ENCODE measurements at regions of chr1 and their contacts with region 1.

Region 1: DNA sequence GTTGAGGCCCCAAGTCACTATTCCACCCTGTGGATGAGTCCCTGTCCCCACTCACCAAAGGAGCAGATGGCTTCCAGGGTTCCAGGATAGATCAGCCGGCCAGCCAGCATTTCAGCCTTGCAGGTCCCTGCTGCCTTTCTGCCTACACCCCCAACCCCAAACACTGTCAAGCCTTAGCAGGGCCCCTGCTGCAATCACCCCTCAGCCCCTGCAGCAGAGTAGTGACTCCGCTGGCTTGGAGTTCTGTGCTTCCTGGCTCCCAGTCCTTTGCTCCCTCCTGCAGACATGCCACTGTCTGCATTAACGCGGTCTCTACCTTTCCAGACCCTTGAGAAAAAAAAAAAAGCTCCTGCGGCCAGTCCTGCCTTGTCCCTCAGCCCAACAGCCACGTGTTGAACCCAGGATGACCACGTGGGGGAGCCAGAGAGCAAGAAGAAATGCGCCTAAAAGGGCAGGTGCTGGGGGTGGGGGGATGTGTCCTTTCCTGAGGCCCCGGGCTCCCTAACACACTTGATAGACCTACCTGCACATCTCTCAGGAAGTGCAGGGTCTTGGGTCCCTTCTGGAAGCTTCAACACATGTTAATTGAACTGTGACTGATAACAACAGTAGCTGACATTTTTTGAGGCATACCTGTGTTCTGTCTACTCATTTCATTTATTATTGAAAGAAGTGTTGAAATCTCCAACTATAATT is 37.4 kb downstream of the RASSF5 start:
- DNase-seq: peak; percentile 89
- H3K4me3 Mint-ChIP-seq: no peak overlapping the region
- H3K27ac Mint-ChIP-seq: no peak overlapping the region
- H3K4me1 Mint-ChIP-seq: no peaks in the 10 kb centered on the region
- H3K27me3 Mint-ChIP-seq: no peaks in the 10 kb centered on the region
- CTCF ChIP-seq: peak; percentile 98

Region 2: DNA sequence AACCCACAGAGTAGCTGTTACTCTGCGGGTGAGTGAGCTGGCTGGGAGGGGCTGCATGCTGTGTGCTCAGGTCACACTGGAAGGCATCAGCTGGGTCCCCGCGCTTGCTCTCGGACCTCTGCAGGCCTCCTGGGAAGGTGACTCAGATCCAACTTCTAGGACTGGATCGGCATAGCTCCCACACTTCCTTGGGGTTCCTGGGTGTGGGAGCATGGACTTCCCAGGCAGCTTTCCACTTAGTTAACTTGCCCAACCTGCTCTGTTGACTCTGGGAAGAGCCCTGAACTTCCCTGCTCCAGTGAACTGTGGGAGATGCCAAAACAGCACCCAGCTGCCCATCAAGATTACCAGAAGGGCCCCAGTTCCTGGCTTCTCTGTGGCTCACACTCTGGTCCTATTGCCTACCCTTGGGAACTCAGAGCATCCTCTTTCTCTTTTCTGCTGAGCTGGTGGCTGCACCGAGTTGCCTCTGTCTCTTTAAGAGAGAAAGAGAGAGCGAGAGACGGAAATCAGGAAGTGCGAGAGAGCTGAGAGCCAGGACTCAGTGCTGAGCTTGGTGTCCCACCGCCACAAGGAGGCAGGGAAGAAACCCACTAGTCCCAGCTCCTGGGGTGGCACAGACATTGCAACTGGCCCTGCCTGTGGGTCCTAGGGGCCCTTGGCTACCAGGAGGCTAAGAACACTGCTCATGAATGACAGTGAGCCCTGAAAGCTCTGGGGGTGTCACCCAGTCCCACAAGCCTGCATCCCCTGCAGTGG is 74.6 kb before region 1 on chr1 and contains the start of gene IKBKE:
- CTCF ChIA-PET with region 1: interaction called, 10 read pairs
- POLR2A ChIA-PET with region 1: interaction called, 3 read pairs
- intact Hi-C with region 1: no loop called
- DNase-seq: peak; percentile 85
- H3K4me3 Mint-ChIP-seq: peak within 1 kb of the TSS; percentile 75
- H3K27ac Mint-ChIP-seq: peak within 1 kb of the TSS; percentile 61
- H3K4me1 Mint-ChIP-seq: peaks cover 43% of the 10 kb centered on the region
- H3K27me3 Mint-ChIP-seq: peaks cover 13% of the 10 kb centered on the region
- CTCF ChIP-seq: no peak
- total RNA-seq, gene IKBKE: 7.1 and 12.1 TPM in 2 replicates

Region 3: DNA sequence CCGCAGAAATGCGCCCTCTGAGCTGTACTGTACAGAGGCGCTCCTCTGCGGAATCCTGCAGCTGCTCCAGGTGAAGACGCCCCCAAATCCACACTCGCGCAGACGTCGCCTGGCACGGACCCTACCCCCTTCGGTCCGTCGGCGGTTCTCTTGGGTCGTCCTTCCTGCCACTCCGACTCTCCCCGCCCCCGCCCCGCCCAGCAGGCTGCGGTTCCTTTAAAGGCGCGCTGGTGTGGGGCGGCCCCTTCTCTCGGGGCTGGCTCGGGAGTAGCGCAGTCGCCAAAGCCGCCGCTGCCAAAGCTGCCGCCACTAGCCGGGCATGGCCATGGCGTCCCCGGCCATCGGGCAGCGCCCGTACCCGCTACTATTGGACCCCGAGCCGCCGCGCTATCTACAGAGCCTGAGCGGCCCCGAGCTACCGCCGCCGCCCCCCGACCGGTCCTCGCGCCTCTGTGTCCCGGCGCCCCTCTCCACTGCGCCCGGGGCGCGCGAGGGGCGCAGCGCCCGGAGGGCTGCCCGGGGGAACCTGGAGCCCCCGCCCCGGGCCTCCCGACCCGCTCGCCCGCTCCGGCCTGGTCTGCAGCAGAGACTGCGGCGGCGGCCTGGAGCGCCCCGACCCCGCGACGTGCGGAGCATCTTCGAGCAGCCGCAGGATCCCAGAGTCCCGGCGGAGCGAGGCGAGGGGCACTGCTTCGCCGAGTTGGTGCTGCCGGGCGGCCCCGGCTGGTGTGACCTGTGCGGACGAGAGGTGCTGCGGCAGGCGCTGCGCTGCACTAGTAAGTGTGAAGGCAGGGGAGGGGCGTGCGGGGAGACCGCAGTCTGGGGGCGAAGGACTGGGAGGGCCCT is 37.2 kb before region 1 on chr1 and contains the start of gene RASSF5:
- CTCF ChIA-PET with region 1: interaction called, 145 read pairs
- POLR2A ChIA-PET with region 1: interaction called, 11 read pairs
- intact Hi-C with region 1: loop called (anchors 1 kb)
- DNase-seq: peak; percentile 87
- H3K4me3 Mint-ChIP-seq: peak within 1 kb of the TSS; percentile 72
- H3K27ac Mint-ChIP-seq: peak within 1 kb of the TSS; percentile 72
- H3K4me1 Mint-ChIP-seq: peaks cover 74% of the 10 kb centered on the region
- H3K27me3 Mint-ChIP-seq: no peaks in the 10 kb centered on the region
- CTCF ChIP-seq: no peak
- total RNA-seq, gene RASSF5: 8.3 and 9.6 TPM in 2 replicates

Region 4: GRCh38 chr1:206513312-206514111 is 31.2 kb before region 1 on chr1:
- CTCF ChIA-PET with region 1: interaction called, 19 read pairs
- POLR2A ChIA-PET with region 1: interaction called, 4 read pairs
- intact Hi-C with region 1: no loop called
- DNase-seq: peak; percentile 100
- H3K4me3 Mint-ChIP-seq: peak overlapping the region; percentile 59
- H3K27ac Mint-ChIP-seq: peak overlapping the region; percentile 99
- H3K4me1 Mint-ChIP-seq: peaks cover 73% of the 10 kb centered on the region
- H3K27me3 Mint-ChIP-seq: no peaks in the 10 kb centered on the region
- CTCF ChIP-seq: no peak

Region 5: GRCh38 chr1:206524739-206525369 is 19.9 kb before region 1 on chr1:
- CTCF ChIA-PET with region 1: interaction called, 23 read pairs
- POLR2A ChIA-PET with region 1: interaction called, 6 read pairs
- intact Hi-C with region 1: no loop called
- DNase-seq: peak; percentile 93
- H3K4me3 Mint-ChIP-seq: no peak overlapping the region
- H3K27ac Mint-ChIP-seq: peak overlapping the region; percentile 85
- H3K4me1 Mint-ChIP-seq: peaks cover 18% of the 10 kb centered on the region
- H3K27me3 Mint-ChIP-seq: no peaks in the 10 kb centered on the region
- CTCF ChIP-seq: no peak

Region 6: DNA sequence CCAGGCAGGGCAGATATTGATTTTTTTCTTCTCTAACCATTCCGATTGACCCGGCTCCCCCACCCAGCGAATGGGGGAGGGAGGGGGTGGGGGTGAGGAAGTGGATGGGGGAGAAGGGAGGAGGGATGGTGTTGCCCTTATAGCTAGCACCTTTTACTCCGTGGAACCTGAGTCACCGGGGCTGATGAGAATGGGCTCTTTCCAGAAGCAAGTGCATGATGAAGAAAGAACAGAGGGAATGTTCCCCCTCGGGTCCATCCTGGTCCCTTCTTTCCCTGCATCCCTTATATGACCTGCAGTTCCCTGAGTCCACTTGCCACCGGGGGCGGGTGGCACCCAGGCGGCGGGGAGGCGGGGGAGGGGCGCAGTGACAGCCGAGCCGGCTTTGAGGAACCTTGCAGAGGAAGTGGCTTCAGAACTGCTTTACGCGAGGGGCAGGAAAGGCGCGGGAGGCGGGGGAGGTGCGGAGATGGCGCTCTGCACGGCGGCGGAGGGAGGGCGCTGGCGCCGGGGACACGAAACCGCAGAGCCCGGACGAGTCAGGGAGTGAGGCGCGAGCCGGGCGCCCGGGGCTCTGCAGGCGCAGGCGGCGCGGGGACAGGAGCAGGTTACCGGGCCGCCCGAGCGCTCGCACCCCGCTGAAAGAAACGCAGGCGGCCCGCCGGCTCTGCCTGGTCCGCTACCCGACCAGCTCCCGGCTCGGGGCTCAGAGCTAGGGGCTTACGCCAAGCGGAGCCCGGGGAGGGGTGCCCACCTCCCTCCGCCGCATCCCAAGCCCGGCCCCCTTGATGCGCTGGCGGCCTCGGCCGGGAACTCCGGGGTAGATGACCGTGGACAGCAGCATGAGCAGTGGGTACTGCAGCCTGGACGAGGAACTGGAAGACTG is 12.3 kb after region 1 on chr1:
- CTCF ChIA-PET with region 1: interaction called, 281 read pairs
- POLR2A ChIA-PET with region 1: interaction called, 4 read pairs
- intact Hi-C with region 1: no loop called
- DNase-seq: peak; percentile 66
- H3K4me3 Mint-ChIP-seq: peak overlapping the region; percentile 68
- H3K27ac Mint-ChIP-seq: no peak overlapping the region
- H3K4me1 Mint-ChIP-seq: no peaks in the 10 kb centered on the region
- H3K27me3 Mint-ChIP-seq: no peaks in the 10 kb centered on the region
- CTCF ChIP-seq: no peak

Region 7: GRCh38 chr1:206590025-206590758 is 45.5 kb after region 1 on chr1:
- CTCF ChIA-PET with region 1: interaction called, 277 read pairs
- POLR2A ChIA-PET with region 1: interaction called, 3 read pairs
- intact Hi-C with region 1: no loop called
- DNase-seq: peak; percentile 95
- H3K4me3 Mint-ChIP-seq: no peak overlapping the region
- H3K27ac Mint-ChIP-seq: peak overlapping the region; percentile 66
- H3K4me1 Mint-ChIP-seq: peaks cover 28% of the 10 kb centered on the region
- H3K27me3 Mint-ChIP-seq: no peaks in the 10 kb centered on the region
- CTCF ChIP-seq: peak; percentile 41

Region 8: DNA sequence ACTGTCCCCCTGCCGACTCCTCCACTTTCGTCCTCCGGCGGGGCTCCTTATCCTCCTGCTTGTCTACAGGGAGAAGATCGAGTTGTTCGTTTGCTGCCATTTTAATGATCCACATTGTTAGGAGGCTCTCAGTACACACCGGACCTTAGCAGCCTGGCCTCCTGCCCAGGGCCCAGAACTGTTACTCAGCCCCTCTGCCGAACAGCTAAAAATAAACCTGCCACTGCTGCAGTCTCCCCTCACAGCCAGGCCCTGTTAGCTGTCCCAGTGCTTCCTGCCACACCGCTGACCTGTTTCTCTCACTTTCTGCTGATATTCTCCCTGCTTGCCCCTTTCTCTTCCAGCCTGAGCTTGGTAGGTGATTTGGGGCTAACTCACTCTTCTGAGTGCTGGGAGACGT is 148.3 kb after region 1 on chr1:
- CTCF ChIA-PET with region 1: no interaction called
- POLR2A ChIA-PET with region 1: no interaction called
- intact Hi-C with region 1: no loop called
- DNase-seq: no peak
- H3K4me3 Mint-ChIP-seq: no peak overlapping the region
- H3K27ac Mint-ChIP-seq: no peak overlapping the region
- H3K4me1 Mint-ChIP-seq: peaks cover 56% of the 10 kb centered on the region
- H3K27me3 Mint-ChIP-seq: no peaks in the 10 kb centered on the region
- CTCF ChIP-seq: no peak

Region 9: DNA sequence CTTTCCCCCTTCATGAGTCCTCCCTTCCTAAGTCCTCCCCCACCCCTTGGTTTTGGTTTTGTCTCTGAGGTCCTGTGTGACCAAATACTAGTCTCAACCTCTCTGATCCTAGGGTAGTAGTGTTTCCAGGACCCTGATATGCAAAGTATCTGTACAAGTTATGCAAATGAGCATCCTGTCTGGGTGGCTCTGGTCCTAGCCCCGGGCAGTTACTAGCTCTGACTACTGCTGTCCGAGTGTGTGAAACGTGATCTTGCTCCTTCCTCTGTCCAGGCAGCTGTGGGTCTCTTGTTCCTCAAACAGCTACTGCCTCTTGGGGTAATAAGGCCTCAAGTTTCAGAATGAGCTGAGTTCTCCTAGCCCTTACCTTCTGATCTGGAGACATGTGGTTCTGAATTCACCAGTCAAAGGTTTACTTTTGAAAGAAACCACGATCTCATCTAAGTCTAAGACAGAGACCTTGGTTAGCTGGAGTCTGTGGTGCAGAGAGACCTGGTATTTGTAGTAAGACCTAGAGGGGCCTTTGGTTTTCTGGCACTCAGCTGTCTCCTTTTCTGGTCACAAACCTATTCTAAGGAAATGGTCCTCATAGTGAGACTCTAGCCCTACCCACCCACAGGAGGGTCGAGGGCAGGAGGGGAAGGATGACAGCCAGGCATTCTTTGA is 194.8 kb after region 1 on chr1:
- CTCF ChIA-PET with region 1: no interaction called
- POLR2A ChIA-PET with region 1: no interaction called
- intact Hi-C with region 1: no loop called
- DNase-seq: no peak
- H3K4me3 Mint-ChIP-seq: no peak overlapping the region
- H3K27ac Mint-ChIP-seq: no peak overlapping the region
- H3K4me1 Mint-ChIP-seq: peaks cover 9% of the 10 kb centered on the region
- H3K27me3 Mint-ChIP-seq: no peaks in the 10 kb centered on the region
- CTCF ChIP-seq: no peak